Motor neuron (in vitro differentiated cells): ENCODE measurements at regions of chr16 and their contacts with region 1.

Region 1: DNA sequence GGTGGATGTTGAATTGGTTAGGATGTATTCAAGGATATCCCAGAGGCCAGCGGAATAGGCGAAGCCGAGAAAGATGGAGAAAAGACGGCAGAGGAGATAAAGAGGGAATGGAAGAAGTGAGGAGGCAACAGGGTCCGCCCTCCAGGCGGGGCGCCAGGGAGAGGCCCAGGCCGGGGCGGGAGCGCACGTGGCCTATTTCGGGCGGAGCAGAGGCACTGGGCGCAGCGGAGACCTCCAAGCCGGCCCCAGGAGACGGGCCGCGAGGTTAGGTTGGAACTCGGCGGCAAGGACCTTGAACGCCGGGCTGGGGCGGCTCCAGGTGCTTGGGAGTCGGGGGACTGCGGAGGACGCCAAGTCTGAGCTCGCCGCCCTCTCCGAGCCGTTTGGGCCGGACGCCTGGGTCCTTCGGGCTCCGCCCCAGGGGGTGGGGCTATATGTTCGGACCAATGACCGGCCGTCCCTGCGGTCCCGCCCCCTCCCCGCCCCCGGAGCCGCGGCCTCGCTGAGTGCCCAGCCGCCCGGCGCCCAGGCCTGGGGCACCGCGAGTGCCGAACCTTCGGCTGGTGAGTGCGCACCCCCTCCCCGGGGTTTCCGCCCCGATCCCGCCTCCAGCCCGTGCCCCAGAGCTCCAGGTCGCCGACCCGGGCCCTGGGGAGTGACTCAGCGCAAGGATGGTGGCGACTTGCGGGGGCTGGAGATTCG is at the start of gene ZNF771:
- ATAC-seq: peak; percentile 88 to 92 (median 91)
- H3K4me3 ChIP-seq: peak within 1 kb of the TSS; percentile 49 to 68 (median 60)
- H3K27ac ChIP-seq: no peak within 1 kb of the TSS
- H3K4me1 ChIP-seq: peaks cover 6 to 9% of the 10 kb centered on the region in 2 donors
- total RNA-seq, gene ZNF771: 1.6 to 6.9 (median 3.7) TPM

Region 2: GRCh38 chr16:30091474-30092372 is 315.5 kb before region 1 on chr16 and contains the start of gene TBX6:
- in situ Hi-C with region 1: loop called in 2 of 9 experiments (anchors 25 kb)
- ATAC-seq: peak; percentile 72 to 88 (median 80)
- H3K4me3 ChIP-seq: peak within 1 kb of the TSS; percentile 29 to 38 (median 35)
- H3K27ac ChIP-seq: peak within 1 kb of the TSS; percentile 59 to 62
- H3K4me1 ChIP-seq: peaks cover 24 to 27% of the 10 kb centered on the region in 2 donors
- total RNA-seq, gene TBX6: 0.25 to 1.6 (median 0.63) TPM

Region 3: DNA sequence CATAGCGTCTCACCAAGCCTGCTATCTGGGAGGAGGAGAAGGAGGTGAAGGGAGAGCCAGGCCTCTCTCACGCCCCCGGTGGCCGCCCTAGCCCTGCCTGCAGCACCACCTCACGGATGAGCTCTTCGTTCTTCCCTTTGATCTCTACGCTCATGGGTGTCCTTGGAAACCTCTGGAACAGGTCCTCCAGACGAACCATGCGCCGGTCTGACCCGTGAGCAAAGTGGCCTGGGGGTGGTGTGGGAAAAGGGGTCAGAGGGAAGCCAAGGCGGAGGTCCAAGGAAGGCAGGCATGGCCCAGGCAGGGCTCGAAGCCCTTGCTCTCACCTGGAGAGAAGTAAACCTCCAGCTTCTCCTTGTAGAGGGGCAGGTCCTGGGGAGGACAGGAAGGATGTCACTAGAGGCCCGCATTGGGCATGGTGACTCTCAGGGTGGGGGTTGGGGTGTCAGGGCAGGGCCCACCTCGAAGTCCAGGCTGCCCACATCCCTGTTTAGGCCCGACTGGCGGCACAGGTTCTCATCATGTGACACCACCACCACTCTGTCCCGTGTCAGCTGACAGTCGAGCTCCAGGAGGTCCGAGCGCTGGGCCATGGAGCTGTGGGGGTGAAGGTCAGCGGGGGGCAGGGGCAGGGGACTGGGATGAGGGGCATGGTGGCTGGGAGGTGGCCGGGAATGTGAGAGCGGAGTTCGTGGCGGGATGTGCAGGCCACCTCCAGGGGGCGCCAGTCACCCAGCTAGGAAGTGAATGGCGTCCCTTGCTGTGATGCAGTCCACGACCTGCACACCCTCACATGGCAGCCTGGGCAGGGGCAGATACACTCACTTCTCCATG is 294.8 kb before region 1 on chr16:
- in situ Hi-C with region 1: loop called in 1 of 9 experiments (anchors 25 kb)
- ATAC-seq: peak in 7 of 8 experiments; percentile 5 to 78 (median 20)
- H3K4me3 ChIP-seq: no peak overlapping the region
- H3K27ac ChIP-seq: peak overlapping the region in 1 of 2 donors; percentile 28
- H3K4me1 ChIP-seq: peaks cover 0 to 8% of the 10 kb centered on the region in 2 donors